ENCODE measurements at regions of chr6 and their contacts with region 1.

Region 1: DNA sequence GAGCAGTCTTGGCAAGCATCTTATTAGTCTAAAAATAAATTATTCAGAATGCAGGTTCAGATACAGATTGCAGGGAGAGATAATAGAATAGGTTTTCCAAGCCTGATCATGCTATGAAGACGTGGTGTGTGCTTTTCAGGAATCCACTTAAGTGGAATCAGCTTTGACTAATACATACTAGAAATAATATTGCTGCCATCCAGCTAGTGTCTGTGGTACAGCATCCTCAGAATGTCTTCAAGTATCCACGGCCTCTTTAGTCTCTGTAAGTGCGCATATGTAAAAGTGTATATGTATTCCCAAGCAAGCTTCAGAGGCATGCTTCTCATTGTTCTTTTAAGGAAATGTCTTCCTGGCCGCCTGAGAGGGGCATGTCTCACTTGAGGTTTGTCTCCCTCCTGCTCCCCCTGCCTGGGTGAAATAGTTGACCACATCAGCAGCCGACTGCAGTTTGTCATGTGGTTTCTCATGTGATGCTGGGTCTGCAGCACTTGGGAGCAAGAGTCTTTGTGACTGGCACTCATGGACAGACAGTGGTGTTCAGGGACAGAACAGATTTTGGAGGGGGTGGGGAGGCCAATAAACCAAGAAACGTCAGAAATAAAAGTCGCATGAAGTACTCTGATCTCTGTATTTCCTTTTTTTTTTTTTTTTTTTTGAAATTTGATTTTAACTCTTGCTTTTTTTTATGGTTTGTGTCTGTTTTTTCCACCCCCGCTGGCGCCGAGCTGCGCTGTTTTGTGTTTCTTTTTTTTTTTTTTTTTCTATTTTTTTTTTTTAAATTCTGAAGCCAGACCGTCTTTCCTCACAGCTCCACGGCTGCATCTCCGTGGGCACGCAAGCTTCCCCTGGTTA is 150.8 kb downstream of the PRL start:
- DNase-seq: no peak
- H3K27ac ChIP-seq: no peak overlapping the region
- CTCF ChIP-seq: no peak

Region 2: GRCh38 chr6:20213271-20213798 is 1932.7 kb before region 1 on chr6:
- CTCF ChIA-PET with region 1: interaction called, 10 read pairs
- POLR2A ChIA-PET with region 1: no interaction called
- DNase-seq: no peak
- H3K27ac ChIP-seq: peak overlapping the region; percentile 86
- CTCF ChIP-seq: no peak

Measured in RWPE1 (cell line).